ENCODE measurements at regions of chr6 and their contacts with region 1.

Region 1: GRCh38 chr6:109678240-109678639 is 12.8 kb downstream of the AK9 start:
- DNase-seq: no peak
- H3K4me3 Mint-ChIP-seq: no peak overlapping the region
- H3K27ac Mint-ChIP-seq: no peak overlapping the region
- H3K4me1 Mint-ChIP-seq: peaks cover 7% of the 10 kb centered on the region
- H3K27me3 Mint-ChIP-seq: no peaks in the 10 kb centered on the region

Region 2: DNA sequence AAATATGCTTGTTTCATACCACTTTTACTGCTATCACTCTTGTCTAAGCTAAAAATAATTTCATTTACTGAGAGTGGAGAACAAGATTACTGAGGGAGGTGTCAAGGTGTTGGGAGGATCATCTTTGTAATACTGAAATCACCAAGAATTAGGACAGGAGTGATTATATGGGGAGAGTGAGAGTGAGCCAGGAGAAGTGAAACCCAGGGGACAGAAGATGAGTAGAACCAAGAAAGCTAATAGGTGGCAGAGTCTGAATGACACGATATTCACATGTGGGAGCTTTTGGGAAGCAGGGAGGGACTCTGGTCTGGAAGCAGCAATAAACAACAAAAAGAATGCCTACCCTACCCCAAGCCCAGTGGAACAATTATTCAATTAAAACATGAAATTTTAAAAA is 45.8 kb before region 1 on chr6:
- intact Hi-C with region 1: loop called (anchors 5 kb)
- DNase-seq: no peak
- H3K4me3 Mint-ChIP-seq: no peak overlapping the region
- H3K27ac Mint-ChIP-seq: no peak overlapping the region
- H3K4me1 Mint-ChIP-seq: peaks cover 17% of the 10 kb centered on the region
- H3K27me3 Mint-ChIP-seq: no peaks in the 10 kb centered on the region

Region 3: DNA sequence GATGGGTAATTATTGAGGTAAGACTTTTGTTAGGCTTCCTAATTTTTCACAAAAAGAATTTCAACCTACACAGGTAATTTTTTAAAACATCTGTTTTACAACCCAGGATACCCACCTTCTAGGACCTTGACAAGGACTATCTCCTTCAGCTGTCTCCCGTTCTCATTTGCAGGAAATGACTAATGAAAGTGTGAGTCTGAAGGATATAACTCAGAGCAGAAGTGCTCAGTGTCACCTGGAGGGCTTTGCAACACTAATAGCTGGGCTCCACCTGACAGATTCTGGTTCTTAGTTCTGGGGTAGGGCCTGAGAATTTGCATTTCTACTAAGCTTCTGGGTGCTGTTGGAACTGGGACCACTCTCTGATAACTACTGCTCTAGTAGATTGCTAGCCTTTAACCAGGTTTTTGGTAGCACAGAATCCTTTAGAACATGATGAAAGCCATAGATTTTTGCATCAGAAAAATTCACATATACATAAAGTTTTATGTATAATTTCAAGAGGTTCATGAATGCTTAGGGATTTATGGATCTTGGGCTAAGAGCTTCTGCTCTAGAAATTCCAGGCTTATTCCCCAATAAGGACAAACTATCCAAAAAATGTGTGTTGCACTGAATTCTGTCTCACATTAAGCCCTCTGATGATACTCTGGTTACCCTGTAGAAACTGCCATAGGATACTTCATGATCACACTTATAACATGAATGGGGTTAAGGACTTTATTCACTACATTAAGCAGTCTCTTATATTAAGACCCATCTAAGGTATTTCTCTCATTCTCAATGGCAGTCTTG is 17.5 kb before region 1 on chr6:
- intact Hi-C with region 1: loop called (anchors 1 kb)
- DNase-seq: no peak
- H3K4me3 Mint-ChIP-seq: no peak overlapping the region
- H3K27ac Mint-ChIP-seq: no peak overlapping the region
- H3K4me1 Mint-ChIP-seq: peaks cover 6% of the 10 kb centered on the region
- H3K27me3 Mint-ChIP-seq: no peaks in the 10 kb centered on the region

Region 4: GRCh38 chr6:110462884-110463481 is 784.7 kb after region 1 on chr6:
- intact Hi-C with region 1: no loop called
- DNase-seq: no peak
- H3K4me3 Mint-ChIP-seq: no peak overlapping the region
- H3K27ac Mint-ChIP-seq: no peak overlapping the region
- H3K4me1 Mint-ChIP-seq: no peaks in the 10 kb centered on the region
- H3K27me3 Mint-ChIP-seq: peaks cover 10% of the 10 kb centered on the region

Measured in activated T-helper 1 cell treated with anti-CD3 and anti-CD28 coated beads, Interleukin-12 subunit alpha, Interleukin-12 subunit beta, Interleukin-2, Interleukin-4 antibody, amounts not matched to agents 30 ng/mL and 10 ng/mL and 1 ng/mL, durations not matched to agents 14 hours and 24 hours and 36 hours (primary cell).